ENCODE measurements at regions of chr1 and their contacts with region 1.

Region 1: DNA sequence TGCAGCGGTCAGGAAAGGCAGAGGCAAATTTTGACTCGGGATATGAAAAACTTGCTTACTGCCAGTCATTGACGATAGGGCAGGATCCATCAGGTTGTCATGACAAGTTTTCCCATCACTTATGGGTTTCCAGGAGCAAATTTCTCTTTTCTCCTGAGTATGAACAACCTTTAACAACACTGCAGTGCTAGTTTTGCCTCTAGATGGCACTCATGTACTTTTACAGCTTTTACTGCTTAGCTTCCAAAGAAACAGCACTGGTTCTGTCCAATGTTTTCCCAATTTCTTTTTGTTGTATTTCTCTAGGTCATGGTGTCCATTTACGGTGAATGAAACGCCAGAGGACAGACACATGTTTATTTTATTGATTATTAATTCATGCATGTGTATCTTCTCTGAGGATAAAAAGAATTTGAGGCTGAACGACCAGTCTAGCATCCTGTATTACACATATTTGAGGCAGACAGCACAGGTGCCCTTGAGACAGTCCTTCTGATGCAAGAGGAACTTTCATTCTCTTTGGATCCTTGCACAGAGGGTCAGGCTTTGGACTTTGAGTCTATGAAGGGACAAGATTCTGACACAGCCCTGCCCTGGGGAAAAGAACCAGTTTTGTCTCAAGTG is 112.3 kb upstream of the TRABD2B start:
- DNase-seq: no peak
- ATAC-seq: peak; percentile 68

Region 2: DNA sequence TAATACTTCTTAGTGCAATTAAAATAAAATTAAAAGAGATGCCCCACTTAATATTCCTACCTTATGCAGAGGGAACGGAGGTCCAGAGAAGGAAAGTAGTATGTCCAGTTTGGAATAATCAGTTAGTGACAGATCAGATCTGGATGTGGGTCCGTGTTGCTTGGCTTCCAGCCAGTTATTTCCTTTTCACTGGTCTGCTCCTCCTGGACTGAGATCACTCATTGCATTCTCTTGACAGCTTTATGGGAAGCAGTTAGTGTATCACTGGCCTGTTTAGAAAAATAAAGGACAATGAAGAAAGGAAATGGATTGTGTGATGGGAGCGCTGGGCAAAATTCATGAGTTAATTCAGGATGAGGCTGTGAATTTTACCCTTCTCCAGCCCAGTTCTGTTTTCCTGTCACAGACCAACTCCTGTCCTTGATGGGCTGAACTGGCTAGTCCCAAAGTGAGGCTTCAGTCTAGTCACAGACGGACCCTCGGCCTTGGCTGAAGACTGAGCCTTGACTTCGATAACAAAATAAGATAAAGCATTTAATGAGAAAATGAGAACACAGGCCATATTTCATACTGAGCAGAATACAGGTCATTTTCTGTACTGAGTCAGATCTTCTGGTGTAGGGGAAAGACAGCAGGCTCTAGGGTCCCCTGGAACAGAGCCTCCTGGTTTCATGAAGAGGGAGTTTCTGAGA is 27.1 kb before region 1 on chr1:
- intact Hi-C with region 1: no loop called
- DNase-seq: no peak
- ATAC-seq: no peak

Region 3: GRCh38 chr1:48202030-48202752 is 92.7 kb after region 1 on chr1:
- intact Hi-C with region 1: loop called (anchors 5 kb)
- DNase-seq: peak; percentile 85
- ATAC-seq: peak; percentile 74